IMR-90 (cell line): ENCODE measurements at regions of chr17 and their contacts with region 1.

Region 1: GRCh38 chr17:32755045-32755805 is 121.7 kb downstream of the MYO1D start:
- DNase-seq: peak; percentile 76
- ATAC-seq: peak; percentile 95
- H3K4me3 ChIP-seq: no peak overlapping the region
- H3K27ac ChIP-seq: no peak overlapping the region
- H3K4me1 ChIP-seq: no peaks in the 10 kb centered on the region
- H3K27me3 ChIP-seq: no peaks in the 10 kb centered on the region
- CTCF ChIP-seq: peak; percentile 64
- POLR2A ChIP-seq: no peak
- RAD21 ChIP-seq: peak; percentile 84

Region 2: DNA sequence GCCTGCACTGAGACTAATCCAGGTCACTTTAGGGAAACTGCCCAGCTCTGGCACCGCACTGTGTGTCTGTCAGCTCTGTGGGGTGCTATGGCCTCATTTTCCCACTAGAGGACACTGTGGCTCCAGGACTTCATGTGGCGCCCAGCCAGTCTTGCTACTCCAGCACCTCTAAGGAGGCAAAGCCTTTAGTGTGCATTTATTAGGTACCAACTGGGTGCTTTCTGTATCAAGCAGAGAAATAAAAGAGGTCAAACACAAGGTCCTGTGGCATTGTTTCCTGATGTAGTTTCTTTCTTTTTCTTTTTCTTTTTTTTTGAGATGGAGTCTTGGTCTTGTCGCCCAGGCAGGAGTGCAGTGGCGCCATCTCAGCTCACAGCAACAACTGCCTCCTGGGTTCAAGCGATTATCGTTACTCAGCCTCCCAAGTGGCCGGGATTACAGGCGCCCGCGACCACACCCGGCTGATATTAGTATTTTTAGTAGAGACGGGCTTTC is 502.1 kb before region 1 on chr17:
- CTCF ChIA-PET with region 1: no interaction called
- POLR2A ChIA-PET with region 1: no interaction called
- dilution Hi-C with region 1: no loop called
- in situ Hi-C with region 1: no loop called
- intact Hi-C with region 1: loop called (anchors 5 kb)
- DNase-seq: peak; percentile 65
- ATAC-seq: peak; percentile 97
- H3K4me3 ChIP-seq: no peak overlapping the region
- H3K27ac ChIP-seq: no peak overlapping the region
- H3K4me1 ChIP-seq: peaks cover 5% of the 10 kb centered on the region; the same call in 1 of the 2 replicates
- H3K27me3 ChIP-seq: peaks cover 4% of the 10 kb centered on the region; the same call in 1 of the 2 replicates
- CTCF ChIP-seq: peak; percentile 98
- POLR2A ChIP-seq: no peak
- RAD21 ChIP-seq: peak; percentile 99

Region 3: GRCh38 chr17:32461853-32462617 is 293.2 kb before region 1 on chr17:
- CTCF ChIA-PET with region 1: interaction called, 3 read pairs
- POLR2A ChIA-PET with region 1: no interaction called
- dilution Hi-C with region 1: no loop called
- in situ Hi-C with region 1: no loop called
- intact Hi-C with region 1: loop called (anchors 1 kb)
- DNase-seq: peak; percentile 52
- ATAC-seq: peak; percentile 82
- H3K4me3 ChIP-seq: no peak overlapping the region
- H3K27ac ChIP-seq: no peak overlapping the region
- H3K4me1 ChIP-seq: peaks cover 1% of the 10 kb centered on the region; the same call in 1 of the 2 replicates
- H3K27me3 ChIP-seq: no peaks in the 10 kb centered on the region
- CTCF ChIP-seq: peak; percentile 56
- POLR2A ChIP-seq: no peak
- RAD21 ChIP-seq: no peak

Region 4: DNA sequence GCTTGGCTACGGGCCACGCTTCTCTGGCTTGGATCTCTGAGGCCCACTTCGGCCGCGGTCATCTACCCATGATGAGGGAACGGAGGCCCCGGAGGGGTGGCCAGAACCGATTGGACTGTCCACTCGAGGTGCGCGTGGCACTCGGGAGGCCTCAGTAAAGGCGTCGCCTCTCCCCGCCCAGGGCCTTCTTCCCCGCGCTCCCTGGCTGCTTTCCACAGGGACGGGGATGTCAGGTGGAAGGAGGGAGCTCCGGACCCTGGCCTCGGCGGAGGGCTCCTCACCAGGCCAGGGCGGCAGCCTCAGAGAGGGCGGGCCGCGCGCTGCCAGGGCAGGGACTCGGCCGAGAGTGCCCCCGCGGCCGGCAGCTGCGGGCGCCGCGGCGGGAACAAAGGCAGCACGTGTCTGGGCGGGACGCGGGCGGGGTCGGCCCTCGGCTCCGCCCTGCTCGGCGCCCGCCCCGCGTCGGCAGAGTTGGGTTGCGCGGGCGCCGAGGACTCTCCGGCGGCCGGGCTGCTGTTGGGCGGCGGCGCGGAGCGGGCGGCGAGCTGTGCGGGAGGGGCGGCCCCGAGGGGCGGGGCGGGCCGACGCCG is 269.0 kb before region 1 on chr17:
- CTCF ChIA-PET with region 1: interaction called, 3 read pairs
- POLR2A ChIA-PET with region 1: no interaction called
- dilution Hi-C with region 1: no loop called
- in situ Hi-C with region 1: loop called (anchors 25 kb)
- intact Hi-C with region 1: loop called (anchors 1 kb)
- DNase-seq: peak; percentile 61
- ATAC-seq: peak; percentile 84
- H3K4me3 ChIP-seq: peak overlapping the region; percentile 91
- H3K27ac ChIP-seq: no peak overlapping the region; the same call in 1 of the 2 replicates
- H3K4me1 ChIP-seq: peaks cover 5% of the 10 kb centered on the region; the same call in 1 of the 2 replicates
- H3K27me3 ChIP-seq: no peaks in the 10 kb centered on the region
- CTCF ChIP-seq: no peak
- POLR2A ChIP-seq: no peak
- RAD21 ChIP-seq: no peak

Region 5: DNA sequence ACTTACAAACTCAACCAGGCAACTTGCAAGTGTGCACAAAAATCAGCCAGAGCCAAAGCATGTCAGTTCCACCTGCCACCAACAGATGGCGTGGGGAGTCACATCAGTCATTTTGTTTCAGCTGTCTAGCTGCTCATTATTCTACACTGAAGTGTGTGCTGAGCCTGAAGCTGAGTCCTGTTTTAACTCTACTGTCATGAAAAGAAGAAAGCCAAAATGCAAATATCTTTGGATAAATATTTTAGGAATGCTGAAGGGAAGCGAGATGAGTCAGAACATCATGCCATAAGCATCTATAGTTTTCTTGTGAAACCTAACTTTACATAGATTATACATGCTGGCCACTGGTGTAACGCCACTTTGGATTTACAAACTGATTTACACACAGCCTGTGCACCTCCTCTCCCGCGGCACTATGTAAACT is 95.8 kb before region 1 on chr17:
- CTCF ChIA-PET with region 1: no interaction called
- POLR2A ChIA-PET with region 1: no interaction called
- dilution Hi-C with region 1: no loop called
- in situ Hi-C with region 1: loop called (anchors 25 kb)
- intact Hi-C with region 1: loop called (anchors 1 kb)
- DNase-seq: peak; percentile 55
- ATAC-seq: peak; percentile 95
- H3K4me3 ChIP-seq: no peak overlapping the region
- H3K27ac ChIP-seq: no peak overlapping the region
- H3K4me1 ChIP-seq: no peaks in the 10 kb centered on the region
- H3K27me3 ChIP-seq: no peaks in the 10 kb centered on the region; the same call in 1 of the 2 replicates
- CTCF ChIP-seq: peak; percentile 68
- POLR2A ChIP-seq: no peak
- RAD21 ChIP-seq: peak; percentile 44; the same call in 1 of the 2 replicates

Region 6: DNA sequence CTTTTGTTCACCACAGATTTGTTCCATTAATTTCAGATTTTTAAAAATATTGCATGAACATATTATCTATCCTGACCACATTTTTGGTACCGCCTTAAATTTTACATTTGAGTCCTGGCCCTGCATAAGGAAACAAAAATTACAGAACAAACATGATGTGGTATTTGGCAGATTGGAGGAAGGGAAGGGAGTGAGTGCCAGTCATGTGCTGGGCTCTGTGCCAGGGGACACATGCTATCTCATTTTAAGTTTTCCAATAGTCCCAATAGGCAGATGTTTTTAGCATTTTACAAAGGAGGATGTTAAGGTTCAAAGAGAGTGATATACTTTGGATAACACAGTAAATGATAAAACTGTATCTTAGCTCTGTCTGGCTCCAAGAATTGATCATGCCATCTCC is 83.3 kb before region 1 on chr17:
- CTCF ChIA-PET with region 1: no interaction called
- POLR2A ChIA-PET with region 1: no interaction called
- dilution Hi-C with region 1: no loop called
- in situ Hi-C with region 1: loop called (anchors 25 kb)
- intact Hi-C with region 1: loop called (anchors 1 kb)
- DNase-seq: no peak
- ATAC-seq: no peak
- H3K4me3 ChIP-seq: no peak overlapping the region
- H3K27ac ChIP-seq: no peak overlapping the region
- H3K4me1 ChIP-seq: no peaks in the 10 kb centered on the region
- H3K27me3 ChIP-seq: no peaks in the 10 kb centered on the region; the same call in 1 of the 2 replicates
- CTCF ChIP-seq: no peak
- POLR2A ChIP-seq: no peak
- RAD21 ChIP-seq: no peak

Region 7: DNA sequence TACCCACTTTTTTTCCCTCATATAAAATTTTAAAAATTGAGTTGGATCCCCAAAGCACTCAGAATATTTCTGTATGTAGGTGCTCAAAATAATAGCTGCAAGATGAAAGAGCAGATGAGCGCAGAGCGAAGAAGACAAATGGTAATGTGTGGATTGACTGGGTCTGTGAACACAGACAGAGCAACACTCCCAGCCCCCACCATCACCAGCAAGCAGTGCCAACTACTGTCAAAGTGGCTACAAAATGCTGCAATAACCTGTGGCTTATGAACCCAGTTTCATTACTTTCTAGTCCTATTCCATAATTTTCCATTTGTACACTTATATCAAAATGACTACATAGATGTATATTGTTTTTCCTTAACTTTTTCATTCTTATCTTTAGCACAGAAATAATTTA is 15.5 kb before region 1 on chr17:
- CTCF ChIA-PET with region 1: no interaction called
- POLR2A ChIA-PET with region 1: no interaction called
- dilution Hi-C with region 1: no loop called
- in situ Hi-C with region 1: no loop called
- intact Hi-C with region 1: no loop called
- DNase-seq: no peak
- ATAC-seq: no peak
- H3K4me3 ChIP-seq: no peak overlapping the region
- H3K27ac ChIP-seq: no peak overlapping the region
- H3K4me1 ChIP-seq: no peaks in the 10 kb centered on the region
- H3K27me3 ChIP-seq: no peaks in the 10 kb centered on the region
- CTCF ChIP-seq: no peak
- POLR2A ChIP-seq: no peak
- RAD21 ChIP-seq: no peak